Activated T-helper 2 cell treated with anti-CD3 and anti-CD28 coated beads, Interferon-gamma antibody, Interleukin-2, Interleukin-4, amounts not matched to agents 10 μg/mL and 5 μg/mL and 100 μg/mL, durations not matched to agents 14 hours and 24 hours and 36 hours (primary cell): ENCODE measurements at regions of chr1 and their contacts with region 1.

Region 1: GRCh38 chr1:205227584-205228006 is at the start of gene TMCC2:
- DNase-seq: peak; percentile 75
- H3K4me3 Mint-ChIP-seq: peak within 1 kb of the TSS; percentile 97
- H3K27ac Mint-ChIP-seq: peak within 1 kb of the TSS; percentile 85
- H3K4me1 Mint-ChIP-seq: peaks cover 39% of the 10 kb centered on the region
- H3K27me3 Mint-ChIP-seq: peaks cover 30% of the 10 kb centered on the region
- total RNA-seq, gene TMCC2: 13.4 and 14.0 TPM in 2 replicates

Region 2: GRCh38 chr1:205211169-205211838 is 16.3 kb before region 1 on chr1 and contains the start of gene DSTYK:
- intact Hi-C with region 1: loop called (anchors 1 kb)
- DNase-seq: peak; percentile 87
- H3K4me3 Mint-ChIP-seq: peak within 1 kb of the TSS; percentile 89
- H3K27ac Mint-ChIP-seq: peak within 1 kb of the TSS; percentile 95
- H3K4me1 Mint-ChIP-seq: peaks cover 36% of the 10 kb centered on the region
- H3K27me3 Mint-ChIP-seq: no peaks in the 10 kb centered on the region
- total RNA-seq, gene DSTYK: 27.3 and 28.6 TPM in 2 replicates

Region 3: DNA sequence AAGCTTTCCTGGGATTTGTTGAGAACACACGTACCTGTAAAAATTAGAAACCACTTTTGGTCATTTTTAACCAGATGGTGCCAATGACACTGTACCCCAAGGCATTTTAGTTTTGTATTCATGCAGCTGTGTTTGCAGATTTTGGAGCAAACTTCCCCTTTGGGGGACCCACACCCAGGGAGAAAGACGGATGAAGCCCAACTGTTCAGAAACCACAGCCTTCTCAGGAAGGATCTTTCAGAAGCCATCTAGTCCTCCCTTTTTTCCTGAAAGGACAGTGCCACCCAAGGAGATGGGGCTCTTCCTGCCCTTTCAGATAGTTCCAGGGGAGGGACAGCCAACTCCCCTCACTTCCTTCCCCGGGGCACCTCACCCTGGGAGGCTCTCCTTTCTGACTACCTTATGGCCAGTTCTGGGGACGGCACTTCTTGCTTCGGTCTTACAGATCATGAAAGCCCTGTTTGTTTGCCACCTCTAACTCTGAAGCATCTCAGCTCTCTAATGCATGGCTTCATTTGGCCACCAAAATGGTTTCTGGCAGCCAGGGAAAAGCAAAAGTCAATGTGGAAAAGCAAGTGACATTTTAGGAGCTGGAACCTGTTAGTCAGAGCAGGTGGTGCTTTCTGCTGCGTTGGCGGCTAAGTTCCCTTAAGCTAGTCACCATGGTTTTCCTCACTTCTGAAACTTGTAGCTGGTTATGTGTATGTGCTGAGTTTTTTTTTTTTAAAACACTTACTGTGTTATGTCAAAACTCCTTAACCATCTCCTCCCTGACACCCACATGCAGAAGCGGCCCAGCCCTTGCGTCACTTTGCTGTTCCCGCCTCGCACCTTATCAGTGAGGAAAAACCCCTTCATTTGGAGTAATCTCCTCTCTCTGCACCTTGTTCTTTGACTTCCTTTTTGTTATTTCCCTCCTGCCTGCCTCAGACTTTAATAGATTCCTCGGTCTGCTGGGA is 10.2 kb after region 1 on chr1:
- intact Hi-C with region 1: loop called (anchors 1 kb)
- DNase-seq: no peak
- H3K4me3 Mint-ChIP-seq: peak overlapping the region; percentile 43
- H3K27ac Mint-ChIP-seq: peak overlapping the region; percentile 91
- H3K4me1 Mint-ChIP-seq: peaks cover 38% of the 10 kb centered on the region
- H3K27me3 Mint-ChIP-seq: no peaks in the 10 kb centered on the region

Region 4: DNA sequence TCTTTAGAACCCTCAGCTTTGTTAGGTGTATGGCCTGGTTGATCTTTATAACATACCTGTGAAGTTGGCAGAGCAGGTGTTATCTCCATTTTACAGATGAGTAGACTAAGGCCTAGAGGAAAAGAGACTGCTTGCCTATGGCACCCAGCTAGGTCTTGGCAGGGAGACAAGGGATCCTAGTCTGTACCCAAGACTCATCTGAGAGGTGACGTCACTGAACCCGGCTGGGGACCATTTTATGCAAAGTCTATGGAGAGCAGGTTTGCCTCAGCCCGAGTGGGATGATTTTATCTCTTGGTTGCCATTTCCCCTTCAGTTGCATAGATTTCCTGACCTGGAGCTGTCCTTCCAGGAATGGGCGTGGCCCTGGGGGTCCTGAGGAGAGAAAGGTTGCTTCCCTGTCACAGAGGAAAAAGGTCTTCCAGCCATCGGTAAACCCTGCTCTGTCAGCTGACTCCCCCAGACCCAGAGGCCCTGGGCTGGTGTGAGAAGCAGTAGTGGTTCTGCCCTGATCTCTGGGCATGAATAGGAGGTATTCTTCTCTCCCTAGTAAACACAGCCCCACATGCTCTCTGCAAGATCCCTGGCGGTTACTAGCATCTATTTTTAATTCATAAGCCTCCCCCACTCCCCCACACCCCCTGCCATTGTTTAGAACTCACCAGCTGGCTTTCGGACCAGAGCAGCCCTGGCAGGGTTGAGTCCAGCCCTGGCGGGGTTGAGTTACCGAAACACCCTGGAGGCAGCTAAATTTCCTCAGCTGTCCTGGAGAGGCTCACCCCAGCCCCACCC is 19.7 kb after region 1 on chr1:
- intact Hi-C with region 1: loop called (anchors 2 kb)
- DNase-seq: no peak
- H3K4me3 Mint-ChIP-seq: no peak overlapping the region
- H3K27ac Mint-ChIP-seq: peak overlapping the region; percentile 14
- H3K4me1 Mint-ChIP-seq: peaks cover 18% of the 10 kb centered on the region
- H3K27me3 Mint-ChIP-seq: no peaks in the 10 kb centered on the region